ENCODE measurements at regions of chr3 and their contacts with region 1.

Region 1: GRCh38 chr3:24640330-24640877 is 145.8 kb upstream of the THRB start:
- DNase-seq: peak in 3 of 4 donors; percentile 10 to 40 (median 26)
- ATAC-seq: peak; percentile 71
- H3K4me3 ChIP-seq: no peak overlapping the region
- H3K27ac ChIP-seq: no peak overlapping the region
- H3K4me1 ChIP-seq: no peaks in the 10 kb centered on the region
- H3K27me3 ChIP-seq: no peaks in the 10 kb centered on the region
- CTCF ChIP-seq: peak; percentile 31 to 73 (median 69)
- POLR2A ChIP-seq: no peak

Region 2: GRCh38 chr3:24264748-24265158 is 375.7 kb before region 1 on chr3:
- intact Hi-C with region 1: loop called (anchors 10 kb)
- DNase-seq: peak; percentile 24 to 33 (median 27)
- ATAC-seq: peak; percentile 64
- H3K4me3 ChIP-seq: no peak overlapping the region
- H3K27ac ChIP-seq: no peak overlapping the region
- H3K4me1 ChIP-seq: peaks cover 9% of the 10 kb centered on the region
- H3K27me3 ChIP-seq: no peaks in the 10 kb centered on the region
- CTCF ChIP-seq: peak; percentile 67 to 84 (median 70)
- POLR2A ChIP-seq: no peak

Region 3: DNA sequence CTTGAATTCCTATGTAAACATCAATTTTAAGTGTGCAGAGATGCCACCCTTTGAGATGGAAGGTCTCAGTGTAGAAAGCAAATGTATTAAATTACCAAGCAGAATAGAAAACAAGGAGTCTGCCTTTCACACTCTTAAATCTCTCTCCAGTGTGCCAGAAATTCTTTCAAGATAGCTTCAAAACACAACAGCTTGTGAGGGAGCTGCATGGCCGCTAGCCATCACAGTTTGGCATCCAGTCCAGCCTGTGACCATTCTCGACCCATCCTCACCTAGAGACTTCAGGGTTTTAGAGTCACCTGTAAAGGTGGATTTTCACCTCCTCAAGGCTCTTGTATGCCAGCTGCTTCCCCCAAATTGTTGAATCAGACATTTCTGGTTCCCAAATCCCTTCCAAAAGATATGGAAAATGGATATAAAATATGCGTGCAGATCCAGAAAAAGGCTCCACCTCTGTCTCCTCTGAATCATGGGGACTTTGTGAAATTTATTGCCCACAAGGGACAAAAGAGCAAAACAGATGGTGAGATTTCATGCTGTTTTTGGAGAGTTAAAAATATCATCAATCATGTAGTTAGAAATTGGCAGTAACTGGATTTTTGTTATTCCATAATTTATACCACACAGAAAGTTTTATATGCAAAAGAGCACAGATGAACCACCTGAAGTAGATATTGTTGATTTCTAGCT is 31.6 kb before region 1 on chr3:
- intact Hi-C with region 1: no loop called
- DNase-seq: no peak
- ATAC-seq: no peak
- H3K4me3 ChIP-seq: no peak overlapping the region
- H3K27ac ChIP-seq: no peak overlapping the region
- H3K4me1 ChIP-seq: peaks cover 9% of the 10 kb centered on the region
- H3K27me3 ChIP-seq: no peaks in the 10 kb centered on the region
- CTCF ChIP-seq: no peak
- POLR2A ChIP-seq: no peak